Naive thymus-derived CD4-positive, alpha-beta T cell (primary cell): ENCODE measurements at regions of chr4 and their contacts with region 1.

Region 1: GRCh38 chr4:138090150-138090917 is 151.8 kb downstream of the SLC7A11 start:
- DNase-seq: peak in 6 of 9 donors; percentile 2 to 24 (median 10)
- ATAC-seq: peak; percentile 53
- H3K4me3 ChIP-seq: no peak overlapping the region
- H3K4me3 Mint-ChIP-seq: no peak overlapping the region
- H3K27ac ChIP-seq: no peak overlapping the region
- H3K27ac Mint-ChIP-seq: no peak overlapping the region
- H3K4me1 ChIP-seq: no peaks in the 10 kb centered on the region
- H3K4me1 Mint-ChIP-seq: peaks cover 0 to 2% (median 0%) of the 10 kb centered on the region in 7 donors
- H3K27me3 ChIP-seq: no peaks in the 10 kb centered on the region
- H3K27me3 Mint-ChIP-seq: peaks cover 0 to 5% (median 0%) of the 10 kb centered on the region in 5 donors

Region 2: DNA sequence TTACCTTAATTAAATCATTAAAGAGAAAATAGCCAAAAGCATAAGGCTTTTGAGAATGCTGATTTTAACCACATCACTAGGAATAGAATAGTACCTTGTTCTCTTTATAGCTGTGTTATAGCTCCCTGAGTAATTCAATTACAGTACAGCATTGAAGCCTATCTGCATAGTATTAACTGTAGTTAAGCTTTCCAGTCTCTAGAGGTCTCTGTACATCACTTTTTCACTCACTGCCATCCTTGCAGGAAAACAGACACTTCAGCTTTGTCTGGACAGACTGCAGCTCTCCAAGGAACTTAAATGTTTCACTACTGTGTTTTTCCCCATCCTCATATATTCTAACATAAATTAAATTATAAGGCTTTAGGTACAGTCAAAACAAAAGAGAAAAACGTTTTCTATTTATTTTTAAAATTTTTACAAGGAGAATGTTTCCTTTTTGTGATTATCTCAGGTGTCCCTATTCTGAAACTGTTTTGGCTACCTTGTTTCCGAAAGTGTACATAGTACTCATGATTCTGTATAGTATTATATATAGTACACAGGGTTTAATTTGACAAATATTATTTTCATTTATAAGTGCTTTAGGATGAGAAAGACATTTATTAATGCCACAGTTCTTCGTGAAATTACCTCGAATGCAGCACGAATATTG is 965.9 kb before region 1 on chr4:
- CTCF ChIA-PET with region 1: no interaction called
- POLR2A ChIA-PET with region 1: no interaction called
- intact Hi-C with region 1: loop called in 1 of 2 experiments (anchors 2 kb)
- DNase-seq: no peak
- ATAC-seq: no peak
- H3K4me3 ChIP-seq: no peak overlapping the region
- H3K4me3 Mint-ChIP-seq: no peak overlapping the region
- H3K27ac ChIP-seq: no peak overlapping the region
- H3K27ac Mint-ChIP-seq: no peak overlapping the region
- H3K4me1 ChIP-seq: no peaks in the 10 kb centered on the region
- H3K4me1 Mint-ChIP-seq: no peaks in the 10 kb centered on the region
- H3K27me3 ChIP-seq: no peaks in the 10 kb centered on the region
- H3K27me3 Mint-ChIP-seq: no peaks in the 10 kb centered on the region

Region 3: DNA sequence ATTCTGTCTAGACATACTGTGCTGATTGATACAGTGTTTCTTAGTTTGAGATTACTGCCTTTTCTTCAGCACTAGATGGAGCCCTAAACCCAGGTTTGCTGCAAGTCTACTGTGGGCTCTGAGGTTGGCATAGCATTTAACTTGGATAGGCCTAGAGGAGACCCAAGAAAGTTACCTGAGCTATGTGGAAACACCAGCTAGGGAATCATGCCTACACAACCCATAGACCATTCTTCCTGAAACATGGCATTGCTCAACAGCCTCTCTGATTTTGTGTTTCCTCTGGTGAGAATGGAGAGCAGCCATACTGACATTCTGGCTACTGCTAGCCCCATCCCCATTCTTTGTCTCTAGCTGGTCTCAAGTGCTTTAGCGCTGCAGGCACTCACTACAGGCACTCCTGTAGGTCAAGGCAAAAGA is 270.4 kb before region 1 on chr4:
- CTCF ChIA-PET with region 1: no interaction called
- POLR2A ChIA-PET with region 1: no interaction called
- intact Hi-C with region 1: loop called in 1 of 2 experiments (anchors 2 kb)
- DNase-seq: no peak
- ATAC-seq: no peak
- H3K4me3 ChIP-seq: no peak overlapping the region
- H3K4me3 Mint-ChIP-seq: no peak overlapping the region
- H3K27ac ChIP-seq: no peak overlapping the region
- H3K27ac Mint-ChIP-seq: no peak overlapping the region
- H3K4me1 ChIP-seq: no peaks in the 10 kb centered on the region
- H3K4me1 Mint-ChIP-seq: no peaks in the 10 kb centered on the region
- H3K27me3 ChIP-seq: no peaks in the 10 kb centered on the region
- H3K27me3 Mint-ChIP-seq: no peaks in the 10 kb centered on the region

Region 4: GRCh38 chr4:138114434-138114833 is 24.1 kb after region 1 on chr4:
- CTCF ChIA-PET with region 1: no interaction called
- POLR2A ChIA-PET with region 1: no interaction called
- intact Hi-C with region 1: no loop called
- DNase-seq: no peak
- ATAC-seq: no peak
- H3K4me3 ChIP-seq: no peak overlapping the region
- H3K4me3 Mint-ChIP-seq: no peak overlapping the region
- H3K27ac ChIP-seq: no peak overlapping the region
- H3K27ac Mint-ChIP-seq: no peak overlapping the region
- H3K4me1 ChIP-seq: no peaks in the 10 kb centered on the region
- H3K4me1 Mint-ChIP-seq: no peaks in the 10 kb centered on the region
- H3K27me3 ChIP-seq: no peaks in the 10 kb centered on the region
- H3K27me3 Mint-ChIP-seq: peaks cover 0 to 5% (median 0%) of the 10 kb centered on the region in 5 donors

Region 5: GRCh38 chr4:138259801-138260200 is 169.5 kb after region 1 on chr4:
- CTCF ChIA-PET with region 1: no interaction called
- POLR2A ChIA-PET with region 1: no interaction called
- intact Hi-C with region 1: loop called in 1 of 2 experiments (anchors 10 kb)
- DNase-seq: no peak
- ATAC-seq: no peak
- H3K4me3 ChIP-seq: no peak overlapping the region
- H3K4me3 Mint-ChIP-seq: no peak overlapping the region
- H3K27ac ChIP-seq: no peak overlapping the region
- H3K27ac Mint-ChIP-seq: no peak overlapping the region
- H3K4me1 ChIP-seq: no peaks in the 10 kb centered on the region
- H3K4me1 Mint-ChIP-seq: peaks cover 0 to 10% (median 4%) of the 10 kb centered on the region in 7 donors
- H3K27me3 ChIP-seq: no peaks in the 10 kb centered on the region
- H3K27me3 Mint-ChIP-seq: peaks cover 0 to 51% (median 0%) of the 10 kb centered on the region in 5 donors

Region 6: GRCh38 chr4:138680989-138681604 is 590.8 kb after region 1 on chr4:
- CTCF ChIA-PET with region 1: no interaction called
- POLR2A ChIA-PET with region 1: no interaction called
- intact Hi-C with region 1: loop called in 1 of 2 experiments (anchors 2 kb)
- DNase-seq: peak; percentile 20 to 70 (median 42)
- ATAC-seq: peak; percentile 67
- H3K4me3 ChIP-seq: no peak overlapping the region
- H3K4me3 Mint-ChIP-seq: no peak overlapping the region
- H3K27ac ChIP-seq: no peak overlapping the region
- H3K27ac Mint-ChIP-seq: no peak overlapping the region
- H3K4me1 ChIP-seq: no peaks in the 10 kb centered on the region
- H3K4me1 Mint-ChIP-seq: no peaks in the 10 kb centered on the region
- H3K27me3 ChIP-seq: no peaks in the 10 kb centered on the region
- H3K27me3 Mint-ChIP-seq: peaks cover 15 to 33% (median 24%) of the 10 kb centered on the region in 5 donors

Region 7: GRCh38 chr4:138870737-138871554 is 780.6 kb after region 1 on chr4:
- CTCF ChIA-PET with region 1: no interaction called
- POLR2A ChIA-PET with region 1: no interaction called
- intact Hi-C with region 1: loop called (anchors 2 to 5 kb)
- DNase-seq: peak in 8 of 9 donors; percentile 8 to 36 (median 24)
- ATAC-seq: peak; percentile 64
- H3K4me3 ChIP-seq: no peak overlapping the region
- H3K4me3 Mint-ChIP-seq: no peak overlapping the region
- H3K27ac ChIP-seq: no peak overlapping the region
- H3K27ac Mint-ChIP-seq: no peak overlapping the region
- H3K4me1 ChIP-seq: no peaks in the 10 kb centered on the region
- H3K4me1 Mint-ChIP-seq: no peaks in the 10 kb centered on the region
- H3K27me3 ChIP-seq: no peaks in the 10 kb centered on the region
- H3K27me3 Mint-ChIP-seq: peaks cover 13 to 27% (median 23%) of the 10 kb centered on the region in 5 donors